Body of pancreas (tissue), 4 donors: ENCODE measurements at regions of chr3 and their contacts with region 1.

Region 1: DNA sequence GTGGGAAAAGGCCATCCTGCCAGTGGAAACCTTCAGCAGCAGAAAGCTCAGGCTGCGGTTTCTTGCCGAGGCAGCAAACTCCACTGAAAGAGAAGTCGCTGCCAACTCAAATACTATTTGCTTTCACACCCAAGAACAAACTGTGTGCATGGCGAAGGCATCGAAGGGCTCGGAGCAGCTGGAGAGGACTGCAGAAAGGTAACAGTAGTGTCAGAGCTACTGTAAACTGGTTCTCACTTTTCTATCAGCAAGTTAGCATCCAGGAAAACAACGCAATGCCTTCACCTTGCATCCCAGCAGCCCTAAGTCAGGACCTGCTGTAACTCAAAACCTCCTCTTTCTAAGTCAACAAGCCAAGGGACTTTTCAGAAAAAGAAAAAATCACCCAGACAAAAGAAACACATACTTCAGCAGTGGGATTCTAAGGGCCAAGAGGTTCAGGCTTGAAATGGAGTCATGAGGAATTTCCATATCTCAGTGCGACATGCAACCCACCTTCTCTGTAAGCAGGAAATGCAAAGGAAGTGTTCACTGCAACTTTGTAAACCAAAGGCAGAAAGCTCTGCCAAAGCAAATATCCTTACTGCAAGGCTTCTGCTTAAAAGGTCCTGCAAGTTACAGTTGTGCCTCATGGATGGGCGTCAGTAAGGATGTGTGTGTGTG is 193.5 kb downstream of the FOXP1 start:
- DNase-seq: peak; percentile 66 to 84 (median 79)
- ATAC-seq: peak; percentile 91
- H3K4me3 ChIP-seq: no peak overlapping the region
- H3K27ac ChIP-seq: peak overlapping the region in 3 of 4 donors; percentile 54 to 74 (median 61)
- H3K4me1 ChIP-seq: peaks cover 16% of the 10 kb centered on the region
- H3K27me3 ChIP-seq: no peaks in the 10 kb centered on the region
- CTCF ChIP-seq: no peak
- POLR2A ChIP-seq: no peak

Region 2: DNA sequence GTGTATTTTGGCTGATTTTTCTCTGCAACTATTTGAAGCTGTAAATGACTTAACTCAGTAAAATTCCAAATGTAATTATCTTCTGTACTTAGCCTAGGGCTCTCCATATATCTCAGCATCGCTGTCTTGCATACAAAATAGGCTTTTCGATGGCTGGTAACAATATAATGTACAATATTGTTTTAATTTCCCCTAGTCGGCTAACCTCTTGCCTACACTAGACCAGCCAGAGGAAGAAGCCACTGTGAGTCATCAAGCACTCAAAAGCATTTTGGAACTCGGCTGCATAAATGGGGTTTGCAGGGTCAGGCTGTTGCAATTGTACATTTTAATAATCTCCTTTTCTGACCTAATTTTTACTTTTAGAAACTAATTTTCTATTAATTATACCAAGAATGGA is 390.3 kb before region 1 on chr3:
- intact Hi-C with region 1: loop called (anchors 10 kb)
- DNase-seq: peak in 1 of 4 donors; percentile 29
- ATAC-seq: no peak
- H3K4me3 ChIP-seq: no peak overlapping the region
- H3K27ac ChIP-seq: no peak overlapping the region
- H3K4me1 ChIP-seq: no peaks in the 10 kb centered on the region
- H3K27me3 ChIP-seq: no peaks in the 10 kb centered on the region
- CTCF ChIP-seq: no peak
- POLR2A ChIP-seq: no peak

Region 3: DNA sequence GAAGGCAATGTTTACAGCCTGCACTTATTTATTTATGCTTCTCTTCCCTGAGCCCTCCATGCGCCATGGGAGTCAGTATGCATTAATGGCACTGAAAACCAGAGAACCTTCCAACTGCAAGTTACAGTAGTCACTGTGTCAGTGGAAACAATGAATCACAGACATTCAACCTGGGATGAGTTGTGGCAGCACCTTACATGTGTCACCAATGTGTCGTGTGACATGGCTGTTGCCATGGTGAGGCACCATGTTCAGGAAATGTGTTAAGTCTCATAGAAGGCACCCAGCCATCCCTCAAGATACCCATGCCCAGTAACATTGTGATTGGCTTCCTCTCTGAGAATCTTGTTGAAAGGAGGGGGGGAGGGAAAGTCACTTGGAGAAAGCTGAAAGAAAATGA is 88.5 kb after region 1 on chr3:
- intact Hi-C with region 1: no loop called
- DNase-seq: no peak
- ATAC-seq: no peak
- H3K4me3 ChIP-seq: no peak overlapping the region
- H3K27ac ChIP-seq: no peak overlapping the region
- H3K4me1 ChIP-seq: peaks cover 7% of the 10 kb centered on the region
- H3K27me3 ChIP-seq: no peaks in the 10 kb centered on the region
- CTCF ChIP-seq: no peak
- POLR2A ChIP-seq: no peak